Ascending aorta (tissue), 2 donors: ENCODE measurements at regions of chr6 and their contacts with region 1.

Region 1: DNA sequence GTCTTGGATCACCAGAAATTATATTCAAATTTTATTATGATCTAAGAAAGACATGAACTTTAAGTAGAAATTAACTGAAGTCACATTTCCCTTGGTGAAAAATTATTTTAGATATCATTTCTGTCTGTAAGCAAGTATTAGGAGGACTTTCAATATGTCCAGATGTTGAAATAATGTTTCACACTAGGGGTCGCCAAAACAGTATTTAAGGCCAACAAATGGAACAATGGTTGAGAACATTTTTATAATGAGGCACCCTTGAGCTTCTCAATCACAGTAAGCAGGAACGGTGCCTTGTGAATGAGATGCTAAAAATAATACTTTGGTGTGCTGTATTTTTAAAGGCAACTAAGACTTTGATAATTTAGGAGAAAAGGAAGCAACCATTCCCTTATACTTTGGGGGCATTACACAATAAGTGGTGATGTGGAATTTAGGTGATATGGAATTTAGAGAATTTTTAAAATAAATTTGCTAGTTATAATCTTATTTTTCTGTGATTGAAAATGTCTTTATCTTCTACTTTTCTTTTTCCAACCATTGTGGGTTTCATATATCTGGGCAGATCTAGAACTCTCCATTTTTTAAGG is 9.6 kb upstream of the SF3B5 start:
- DNase-seq: no peak
- H3K4me3 ChIP-seq: no peak overlapping the region
- H3K27ac ChIP-seq: no peak overlapping the region
- H3K4me1 ChIP-seq: no peaks in the 10 kb centered on the region
- H3K27me3 ChIP-seq: no peaks in the 10 kb centered on the region
- CTCF ChIP-seq: peak; percentile 52 to 68 (median 67)

Region 2: DNA sequence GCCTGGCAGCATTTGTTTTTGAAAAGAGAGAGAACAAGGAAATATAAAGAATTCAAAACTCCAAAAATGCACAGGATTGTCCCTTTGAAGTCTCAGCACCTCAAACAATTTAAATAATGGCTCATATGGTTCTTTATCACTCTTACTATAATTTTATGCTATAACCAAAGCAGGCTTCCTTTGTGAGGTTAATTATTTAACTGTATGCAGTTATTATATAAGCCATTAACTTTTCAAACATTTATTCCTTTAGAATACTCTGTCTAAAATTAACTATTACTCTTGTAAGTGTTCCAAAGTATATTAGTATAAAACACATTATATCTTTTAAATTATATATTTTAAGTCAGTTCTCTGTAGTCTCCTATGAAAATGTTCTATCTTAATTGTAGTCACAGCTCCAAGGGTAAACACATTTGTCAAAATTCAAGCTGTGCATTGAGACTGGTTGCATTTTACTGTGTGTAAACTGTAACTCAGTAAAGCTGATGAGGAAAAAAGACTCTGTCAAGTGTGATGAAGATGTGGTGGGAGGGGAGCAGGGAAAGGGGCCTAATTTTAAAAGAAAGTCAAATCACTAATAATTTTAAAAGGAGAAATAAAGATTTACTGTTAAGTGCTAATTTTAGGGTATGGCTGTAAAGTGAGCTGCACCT is 76.9 kb before region 1 on chr6:
- intact Hi-C with region 1: no loop called
- DNase-seq: no peak
- H3K4me3 ChIP-seq: no peak overlapping the region
- H3K27ac ChIP-seq: no peak overlapping the region
- H3K4me1 ChIP-seq: no peaks in the 10 kb centered on the region
- H3K27me3 ChIP-seq: no peaks in the 10 kb centered on the region
- CTCF ChIP-seq: no peak

Region 3: GRCh38 chr6:144190593-144190992 is 85.6 kb after region 1 on chr6:
- intact Hi-C with region 1: loop called (anchors 5 kb)
- DNase-seq: peak in 1 of 2 donors; percentile 87
- H3K4me3 ChIP-seq: no peak overlapping the region
- H3K27ac ChIP-seq: peak overlapping the region; percentile 33
- H3K4me1 ChIP-seq: peaks cover 0 to 3% of the 10 kb centered on the region in 2 donors
- H3K27me3 ChIP-seq: no peaks in the 10 kb centered on the region
- CTCF ChIP-seq: no peak

Region 4: DNA sequence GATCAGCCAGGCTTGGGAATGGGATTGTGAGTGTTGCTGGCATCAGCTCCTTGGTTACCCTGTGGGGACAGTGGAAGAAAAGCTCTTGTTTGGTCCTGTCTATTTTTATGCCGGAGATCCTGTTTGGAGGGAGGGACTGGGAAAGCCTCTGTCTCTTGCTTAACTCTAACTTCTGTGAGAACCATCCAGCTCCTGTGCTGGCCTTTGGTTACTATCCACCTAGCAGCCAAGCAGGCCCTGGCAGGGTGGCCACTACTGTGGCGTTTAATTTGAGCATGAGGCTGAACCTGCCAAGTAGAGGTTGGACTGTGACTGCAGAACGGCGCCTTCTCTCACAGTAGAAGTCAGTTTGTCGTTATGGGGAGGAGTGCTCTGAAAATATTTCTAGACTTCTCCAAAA is 373.5 kb after region 1 on chr6:
- intact Hi-C with region 1: loop called (anchors 2 kb)
- DNase-seq: no peak
- H3K4me3 ChIP-seq: no peak overlapping the region
- H3K27ac ChIP-seq: peak overlapping the region; percentile 3 to 59
- H3K4me1 ChIP-seq: peaks cover 2 to 21% of the 10 kb centered on the region in 2 donors
- H3K27me3 ChIP-seq: no peaks in the 10 kb centered on the region
- CTCF ChIP-seq: no peak